SK-N-SH (cell line): ENCODE measurements at regions of chr14 and their contacts with region 1.

Region 1: DNA sequence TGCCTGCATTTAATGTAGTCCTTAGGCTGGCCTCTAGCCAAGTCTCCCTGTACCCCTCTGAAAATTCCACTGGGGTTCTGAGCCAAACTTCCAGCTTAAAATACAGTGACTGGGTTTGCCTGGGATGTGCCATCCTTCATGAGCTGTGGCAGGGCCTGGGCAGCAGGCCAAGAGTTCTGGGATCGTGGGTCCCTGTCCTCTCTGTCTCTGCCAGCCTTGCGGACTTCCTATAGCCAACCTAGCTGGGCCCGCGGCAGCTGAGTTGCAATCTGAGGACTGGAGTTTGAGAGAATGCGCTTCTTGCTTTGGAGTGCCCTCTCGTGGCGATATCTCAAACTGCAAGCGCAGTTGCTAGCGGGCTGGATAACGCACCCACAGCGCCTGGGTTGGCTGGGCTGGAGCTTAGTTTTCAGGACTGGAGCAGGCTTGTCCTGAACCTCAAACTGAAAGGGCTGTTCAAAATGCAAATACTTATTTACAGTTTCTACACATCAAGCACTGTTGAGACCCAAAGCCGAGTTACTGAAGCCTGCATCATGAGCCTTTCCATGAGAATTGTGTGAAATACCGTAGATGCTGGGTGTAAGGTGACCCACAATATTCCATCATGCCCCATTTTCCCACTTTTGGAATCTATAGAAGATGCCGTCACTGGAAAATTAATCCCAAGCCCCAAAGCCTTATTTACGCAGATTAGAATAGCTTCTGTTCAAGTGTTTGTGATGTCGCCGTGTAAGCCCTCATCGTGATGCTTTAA is 7.3 kb upstream of the IFI27L2 start:
- DNase-seq: peak; percentile 81
- H3K4me3 ChIP-seq: no peak overlapping the region
- H3K27ac ChIP-seq: no peak overlapping the region
- H3K4me1 ChIP-seq: peaks cover 0 to 3% of the 10 kb centered on the region in 2 experiments; a peak in 2 of 4 replicates
- H3K27me3 ChIP-seq: no peaks in the 10 kb centered on the region
- CTCF ChIP-seq: peak; percentile 92
- EP300 ChIP-seq: no peak
- RAD21 ChIP-seq: peak; percentile 98

Region 2: DNA sequence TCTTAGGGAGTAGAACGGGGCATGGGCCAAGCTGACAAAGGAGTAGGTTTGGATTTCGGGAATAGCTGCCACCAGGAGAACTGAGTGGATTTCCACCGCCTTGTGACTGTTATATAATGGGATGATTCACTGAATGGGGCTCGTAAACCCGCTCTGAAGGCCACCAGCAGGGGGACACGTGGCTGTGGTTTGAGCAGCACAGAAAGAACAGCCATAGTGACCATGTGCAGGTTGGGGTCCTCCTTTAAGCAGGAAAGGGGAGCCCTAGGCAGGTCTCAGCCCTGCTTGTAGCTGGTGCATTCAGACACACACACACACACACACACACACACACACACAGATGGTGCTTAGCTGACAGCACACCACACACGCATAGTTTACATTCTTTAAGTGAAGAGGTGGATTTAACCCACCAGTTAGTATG is 151.8 kb before region 1 on chr14:
- CTCF ChIA-PET with region 1: interaction called, 10 read pairs
- POLR2A ChIA-PET with region 1: no interaction called
- DNase-seq: peak; percentile 47
- H3K4me3 ChIP-seq: no peak overlapping the region
- H3K27ac ChIP-seq: no peak overlapping the region
- H3K4me1 ChIP-seq: peaks cover 5 to 7% of the 10 kb centered on the region in 2 experiments; a peak in 2 of 4 replicates
- H3K27me3 ChIP-seq: no peaks in the 10 kb centered on the region
- CTCF ChIP-seq: peak; percentile 58
- EP300 ChIP-seq: no peak
- RAD21 ChIP-seq: peak; percentile 29; the same call in 1 of the 2 replicates

Region 3: GRCh38 chr14:94036313-94037050 is 100.3 kb before region 1 on chr14:
- CTCF ChIA-PET with region 1: interaction called, 132 read pairs
- POLR2A ChIA-PET with region 1: no interaction called
- DNase-seq: peak; percentile 80
- H3K4me3 ChIP-seq: no peak overlapping the region
- H3K27ac ChIP-seq: no peak overlapping the region
- H3K4me1 ChIP-seq: peaks cover 0 to 14% of the 10 kb centered on the region in 2 experiments; a peak in 1 of 4 replicates
- H3K27me3 ChIP-seq: no peaks in the 10 kb centered on the region
- CTCF ChIP-seq: peak; percentile 78
- EP300 ChIP-seq: no peak
- RAD21 ChIP-seq: peak; percentile 74

Region 4: GRCh38 chr14:94051115-94051514 is 85.6 kb before region 1 on chr14:
- CTCF ChIA-PET with region 1: interaction called, 100 read pairs
- POLR2A ChIA-PET with region 1: no interaction called
- DNase-seq: no peak
- H3K4me3 ChIP-seq: no peak overlapping the region
- H3K27ac ChIP-seq: no peak overlapping the region
- H3K4me1 ChIP-seq: peaks cover 0 to 18% of the 10 kb centered on the region in 2 experiments; a peak in 2 of 4 replicates
- H3K27me3 ChIP-seq: no peaks in the 10 kb centered on the region
- CTCF ChIP-seq: peak; percentile 49
- EP300 ChIP-seq: no peak
- RAD21 ChIP-seq: peak; percentile 44

Region 5: DNA sequence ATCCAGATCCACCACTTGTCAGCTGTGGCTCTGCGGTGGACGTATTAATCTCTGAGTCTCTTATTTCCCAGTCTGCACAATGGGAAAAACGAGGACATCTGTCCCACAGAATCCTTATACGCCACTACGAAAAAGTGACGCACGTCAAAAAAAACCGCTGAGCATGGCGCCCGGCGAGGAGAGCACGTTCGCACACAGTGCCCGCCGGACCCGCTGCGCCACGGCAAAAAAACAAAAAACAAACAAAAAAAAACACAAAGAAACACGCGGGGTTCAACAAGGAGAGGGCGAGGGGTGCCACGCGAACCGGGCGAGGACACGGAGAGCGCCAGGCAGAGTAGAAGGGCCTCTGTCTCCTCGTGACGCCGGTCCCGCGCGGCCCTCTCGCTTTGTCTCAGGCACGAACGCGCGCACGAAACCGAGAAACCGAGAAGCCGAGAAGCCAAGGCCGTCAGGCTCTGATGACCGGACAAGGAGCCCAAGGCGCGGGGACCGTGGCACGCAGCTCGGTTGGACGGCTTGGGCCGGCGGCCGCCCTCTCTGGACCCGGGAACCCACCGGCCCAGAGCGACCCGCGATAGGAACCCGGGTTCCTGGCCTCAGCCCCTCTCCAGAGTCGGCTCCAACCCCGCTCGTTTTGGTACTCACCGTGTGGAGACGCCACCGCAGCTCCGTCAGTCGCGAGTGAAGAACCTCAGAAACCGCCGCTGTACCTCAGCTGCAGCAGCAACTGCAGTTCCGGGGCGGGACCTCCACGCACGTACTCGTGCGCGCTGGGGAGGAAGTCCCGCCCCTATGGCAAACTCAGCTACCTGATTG is 56.1 kb before region 1 on chr14 and contains the start of gene DDX24:
- CTCF ChIA-PET with region 1: interaction called, 14 read pairs
- POLR2A ChIA-PET with region 1: no interaction called
- DNase-seq: peak; percentile 97
- H3K4me3 ChIP-seq: peak within 1 kb of the TSS; percentile 96 to 99
- H3K27ac ChIP-seq: peak within 1 kb of the TSS; percentile 81 to 85
- H3K4me1 ChIP-seq: peaks cover 12 to 30% of the 10 kb centered on the region in 2 experiments; a peak in 3 of 4 replicates
- H3K27me3 ChIP-seq: no peaks in the 10 kb centered on the region
- CTCF ChIP-seq: no peak
- EP300 ChIP-seq: no peak
- RAD21 ChIP-seq: no peak
- polyA plus RNA-seq, gene DDX24: 108 and 148 TPM in 2 replicates

Region 6: GRCh38 chr14:94153750-94154342 is 17.1 kb after region 1 on chr14:
- CTCF ChIA-PET with region 1: interaction called, 25 read pairs
- POLR2A ChIA-PET with region 1: no interaction called
- DNase-seq: no peak
- H3K4me3 ChIP-seq: no peak overlapping the region
- H3K27ac ChIP-seq: no peak overlapping the region
- H3K4me1 ChIP-seq: no peaks in the 10 kb centered on the region
- H3K27me3 ChIP-seq: peaks cover 10% of the 10 kb centered on the region; the same call in 1 of the 2 replicates
- CTCF ChIP-seq: no peak
- EP300 ChIP-seq: no peak
- RAD21 ChIP-seq: no peak

Region 7: GRCh38 chr14:94173885-94174603 is 37.3 kb after region 1 on chr14 and contains the start of gene PPP4R4:
- CTCF ChIA-PET with region 1: interaction called, 43 read pairs
- POLR2A ChIA-PET with region 1: no interaction called
- DNase-seq: peak; percentile 97
- H3K4me3 ChIP-seq: peak within 1 kb of the TSS; percentile 75 to 81
- H3K27ac ChIP-seq: peak within 1 kb of the TSS; percentile 2 to 75; a peak in 3 of 4 replicates
- H3K4me1 ChIP-seq: peaks cover 9 to 11% of the 10 kb centered on the region in 2 experiments; a peak in 2 of 4 replicates
- H3K27me3 ChIP-seq: no peaks in the 10 kb centered on the region
- CTCF ChIP-seq: no peak
- EP300 ChIP-seq: no peak
- RAD21 ChIP-seq: no peak
- polyA plus RNA-seq, gene PPP4R4: 2.5 and 3.5 TPM in 2 replicates

Region 8: DNA sequence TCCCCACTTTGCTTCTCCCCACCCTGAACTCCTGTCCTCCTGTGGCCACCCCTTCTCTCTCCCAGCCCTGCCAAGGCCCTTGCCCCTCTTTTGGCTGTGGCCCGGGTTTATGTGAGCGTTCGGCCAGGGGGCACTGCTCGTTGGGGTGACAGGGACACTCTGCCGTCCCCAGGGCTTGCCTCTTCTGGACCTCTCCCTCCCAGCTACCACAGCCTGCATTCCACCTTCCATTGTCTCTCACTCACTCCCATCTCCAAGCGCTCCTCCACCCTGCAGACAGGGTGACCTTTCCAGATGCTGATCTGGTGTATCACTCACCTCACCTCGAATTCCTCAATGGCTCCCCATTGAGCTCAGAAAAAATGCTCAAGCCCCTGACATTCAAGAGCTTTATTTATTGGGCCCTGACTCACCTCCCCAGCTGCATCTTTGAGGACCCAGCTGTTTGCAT is 337.9 kb after region 1 on chr14:
- CTCF ChIA-PET with region 1: no interaction called
- POLR2A ChIA-PET with region 1: no interaction called
- DNase-seq: no peak
- H3K4me3 ChIP-seq: no peak overlapping the region
- H3K27ac ChIP-seq: no peak overlapping the region
- H3K4me1 ChIP-seq: no peaks in the 10 kb centered on the region
- H3K27me3 ChIP-seq: peaks cover 6% of the 10 kb centered on the region; the same call in 1 of the 2 replicates
- CTCF ChIP-seq: no peak
- EP300 ChIP-seq: no peak
- RAD21 ChIP-seq: no peak